ENCODE measurements at regions of chr17 and their contacts with region 1.

Region 1: DNA sequence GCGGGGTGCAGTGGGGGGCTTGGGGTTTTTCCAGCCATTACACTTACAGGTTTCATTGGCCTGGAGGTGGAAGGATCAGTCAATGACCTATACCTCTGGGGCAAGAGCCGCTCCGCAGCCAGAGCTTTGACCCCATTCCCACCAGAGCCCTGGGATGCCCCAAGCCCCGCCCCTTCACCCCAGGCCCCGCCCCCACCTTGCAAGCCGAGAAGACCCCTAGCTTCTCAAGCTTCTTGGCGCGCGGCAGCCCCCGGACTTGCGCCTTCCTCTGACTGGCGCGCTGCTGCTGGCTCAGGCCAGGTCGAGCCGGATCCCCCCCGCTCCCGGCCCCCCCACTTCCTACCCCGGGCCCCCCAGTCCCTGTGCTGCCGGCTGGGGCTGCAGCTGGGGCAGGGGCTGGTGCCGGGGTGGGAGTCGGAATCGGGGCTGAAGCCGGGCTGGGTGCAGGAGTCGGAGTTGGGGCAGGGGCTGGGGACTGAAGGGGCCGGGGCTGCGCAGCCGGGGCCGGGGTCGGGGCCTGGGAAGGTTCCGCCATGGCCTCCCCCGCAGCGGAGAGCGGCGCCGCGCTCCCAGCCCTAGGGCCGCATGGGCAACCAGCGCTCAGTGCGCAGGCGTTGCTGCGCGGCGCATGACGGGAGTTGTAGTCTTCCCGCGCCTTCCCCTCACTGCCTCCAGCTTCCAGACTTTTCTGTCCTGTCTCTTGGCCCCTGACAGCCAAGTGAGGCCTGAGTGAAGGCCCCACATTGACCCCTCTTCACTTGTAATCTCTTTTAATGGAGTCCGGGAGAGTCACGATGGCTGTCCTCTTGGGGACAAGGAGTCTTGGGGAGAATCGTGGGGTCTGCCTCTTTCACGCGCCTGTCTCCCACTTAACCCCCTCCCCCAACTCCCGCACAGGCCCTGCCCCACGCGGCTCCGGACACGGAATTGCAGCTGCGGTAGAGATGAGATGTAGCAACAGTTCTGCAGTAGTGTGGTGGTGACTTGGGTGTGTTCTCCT is at the start of gene KAT2A:
- DNase-seq: peak; percentile 77 to 88
- ATAC-seq: peak; percentile 78
- total RNA-seq, gene KAT2A: 23.6 TPM

Region 2: DNA sequence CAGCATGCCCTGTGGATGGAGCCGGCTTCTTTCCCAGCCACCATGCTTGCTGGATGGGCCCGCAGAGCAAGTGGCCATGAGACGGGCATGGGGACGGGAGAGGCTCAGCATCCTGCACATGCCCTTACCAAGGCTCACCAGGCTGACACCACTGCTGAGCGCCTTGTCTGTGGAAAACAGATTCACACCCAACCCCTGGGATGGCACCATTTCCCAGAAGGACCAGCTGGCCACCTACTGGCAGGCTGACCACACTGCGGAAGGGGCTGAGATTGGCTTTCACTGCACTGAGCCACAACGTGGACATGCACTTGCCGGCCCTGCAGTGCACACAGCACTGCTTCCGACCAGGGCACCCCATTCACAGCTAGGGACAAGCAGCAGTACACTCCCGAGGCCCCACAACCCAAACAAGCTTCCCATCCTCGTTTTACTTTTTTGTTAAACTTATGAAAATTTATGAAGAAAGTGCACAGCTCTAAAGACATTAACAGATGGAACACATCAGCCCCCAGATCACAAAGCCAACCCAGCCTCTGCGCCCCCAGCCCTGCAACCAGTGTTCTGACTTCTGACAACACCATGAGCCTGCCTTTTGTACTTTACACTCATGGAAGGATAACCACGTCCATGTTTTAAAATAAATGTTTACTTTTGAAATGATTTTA is 791.7 kb before region 1 on chr17:
- intact Hi-C with region 1: no loop called
- DNase-seq: peak in 1 of 2 donors; percentile 59
- ATAC-seq: peak; percentile 90

Region 3: DNA sequence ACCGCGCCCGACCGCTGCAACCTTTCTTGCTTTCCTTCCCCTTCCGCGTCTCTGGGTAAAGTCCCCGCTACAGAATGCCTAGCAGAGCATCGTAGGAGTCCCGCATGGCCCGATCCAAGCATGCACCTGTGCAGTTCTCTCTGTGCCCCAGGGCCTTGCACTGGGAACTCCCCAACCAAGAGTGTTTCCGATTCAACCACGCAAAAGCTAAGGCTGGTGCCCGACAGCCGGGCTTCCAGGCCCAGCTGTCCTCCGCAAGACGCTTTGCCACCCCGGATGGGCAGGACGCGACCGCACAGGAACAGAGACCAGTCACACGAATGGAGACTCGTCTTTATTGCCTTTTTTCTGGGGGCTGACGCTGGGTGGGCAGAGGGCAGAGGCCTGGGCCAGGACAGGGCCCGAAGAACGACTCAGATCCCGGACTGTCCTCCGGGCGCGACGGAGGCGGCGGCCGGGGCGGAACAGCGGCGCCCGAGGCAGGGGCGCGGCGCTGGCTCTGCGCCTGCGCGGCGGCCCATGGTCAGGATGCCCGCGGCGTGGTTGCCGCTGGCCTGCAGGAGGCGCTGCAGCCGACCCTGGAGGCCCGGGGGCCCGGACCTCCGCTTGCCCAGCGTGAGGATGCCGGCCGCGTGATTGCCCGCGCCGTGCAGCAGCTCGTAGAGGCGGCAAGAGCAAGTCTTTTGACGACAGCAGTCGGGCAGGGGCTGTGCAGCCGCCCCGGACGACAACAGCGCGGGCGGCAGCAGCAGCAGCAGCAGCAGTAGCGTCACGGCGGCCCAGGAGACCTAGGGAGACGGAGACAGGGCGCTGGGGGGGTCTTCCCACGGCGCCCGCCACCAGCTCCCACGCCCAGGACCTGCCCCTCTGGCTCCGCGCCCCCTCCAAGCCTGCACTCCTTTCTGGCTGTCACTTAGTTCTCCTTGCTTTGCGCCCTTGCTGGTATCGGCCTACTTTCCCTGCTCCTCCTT is 63.0 kb after region 1 on chr17:
- intact Hi-C with region 1: loop called in 1 of 2 experiments (anchors 10 kb)
- DNase-seq: peak; percentile 55 to 81
- ATAC-seq: peak; percentile 87